ENCODE measurements at regions of chr11 and their contacts with region 1.

Region 1: DNA sequence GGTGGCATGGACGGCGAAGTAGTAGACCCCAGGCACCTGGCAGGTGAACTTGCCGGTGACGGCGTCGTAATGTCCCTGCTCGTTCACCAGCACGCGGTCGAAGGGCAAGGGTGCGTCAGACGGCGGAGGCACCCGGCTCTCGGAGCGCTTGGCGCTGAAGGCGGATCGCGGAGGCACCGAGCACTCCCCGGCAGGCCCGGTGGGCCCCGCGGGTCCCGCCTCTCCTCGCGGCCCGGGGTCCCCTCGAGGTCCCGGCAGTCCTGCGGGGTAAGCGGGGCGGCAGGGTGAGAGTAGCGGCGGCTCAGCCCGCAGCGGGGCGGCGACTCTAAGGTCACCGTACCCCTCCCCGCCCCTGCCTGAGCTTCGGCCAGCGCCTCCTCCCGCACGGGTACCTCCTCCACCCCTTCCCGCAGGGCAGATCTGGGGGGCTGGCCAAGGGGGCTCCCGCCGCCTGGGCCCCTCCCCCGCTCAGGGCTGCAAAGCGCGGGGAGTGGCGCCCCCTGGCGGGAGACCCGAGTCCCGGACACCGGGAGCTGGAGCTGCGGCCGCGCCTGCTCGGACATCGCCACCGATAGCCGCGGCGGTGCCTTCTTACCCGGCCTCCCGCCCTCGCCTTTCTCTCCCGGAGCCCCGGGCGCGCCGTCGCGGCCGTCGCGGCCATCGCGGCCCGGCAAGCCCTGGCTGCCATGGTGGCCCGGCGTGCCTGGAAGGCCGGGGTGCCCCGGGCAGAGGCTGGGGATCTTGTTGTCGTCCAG is 917 bp downstream of the C1QTNF5 start:
- DNase-seq: peak; percentile 71
- H3K4me3 ChIP-seq: peak overlapping the region; percentile 41 to 90 (median 65)
- H3K27ac ChIP-seq: peak overlapping the region; percentile 67
- H3K4me1 ChIP-seq: peaks cover 39% of the 10 kb centered on the region
- H3K27me3 ChIP-seq: no peaks in the 10 kb centered on the region
- CTCF ChIP-seq: peak; percentile 90 to 94
- POLR2A ChIP-seq: no peak

Region 2: DNA sequence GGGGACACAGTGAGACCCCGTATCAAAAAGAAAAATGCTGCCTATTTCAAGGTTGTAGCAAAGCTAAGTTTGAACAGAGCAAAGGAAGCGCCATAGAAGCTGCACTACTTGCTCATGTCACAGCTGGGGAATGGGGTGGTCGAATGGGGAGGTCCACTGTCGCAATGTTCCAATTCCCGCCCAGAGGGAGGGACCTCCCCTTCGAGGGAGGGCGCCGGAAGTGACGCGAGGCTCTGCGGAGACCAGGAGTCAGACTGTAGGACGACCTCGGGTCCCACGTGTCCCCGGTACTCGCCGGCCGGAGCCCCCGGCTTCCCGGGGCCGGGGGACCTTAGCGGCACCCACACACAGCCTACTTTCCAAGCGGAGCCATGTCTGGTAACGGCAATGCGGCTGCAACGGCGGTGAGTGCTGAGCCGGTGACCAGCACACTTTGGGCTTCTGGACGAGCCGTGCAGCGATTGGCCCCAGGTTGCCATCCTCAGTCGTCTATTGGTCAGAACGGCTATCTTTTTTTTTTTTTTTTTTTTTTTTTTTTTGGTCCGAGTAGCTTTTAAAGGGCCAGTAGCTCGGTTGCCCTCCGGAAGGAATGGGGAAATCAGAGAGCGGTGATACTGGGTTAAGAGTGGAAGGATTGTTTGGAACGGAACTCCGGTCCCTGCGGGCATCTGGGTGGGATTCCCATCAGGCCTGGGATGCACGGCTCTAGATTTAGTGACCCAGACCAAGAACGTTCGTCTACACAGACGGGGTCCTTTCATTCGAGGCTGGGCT is 254.9 kb before region 1 on chr11 and contains the start of gene HMBS:
- CTCF ChIA-PET with region 1: no interaction called
- POLR2A ChIA-PET with region 1: no interaction called
- dilution Hi-C with region 1: no loop called
- intact Hi-C with region 1: no loop called
- DNase-seq: peak; percentile 95
- H3K4me3 ChIP-seq: peak within 1 kb of the TSS; percentile 10 to 77 (median 70)
- H3K27ac ChIP-seq: peak within 1 kb of the TSS; percentile 49
- H3K4me1 ChIP-seq: peaks cover 12% of the 10 kb centered on the region
- H3K27me3 ChIP-seq: no peaks in the 10 kb centered on the region
- CTCF ChIP-seq: no peak
- POLR2A ChIP-seq: peak; percentile 97
- total RNA-seq, gene HMBS: 13.5 and 16.1 TPM in 2 replicates

Region 3: GRCh38 chr11:119315131-119316015 is 24.4 kb before region 1 on chr11:
- CTCF ChIA-PET with region 1: interaction called, 301 read pairs
- POLR2A ChIA-PET with region 1: interaction called, 18 read pairs
- dilution Hi-C with region 1: no loop called
- intact Hi-C with region 1: no loop called
- DNase-seq: peak; percentile 49
- H3K4me3 ChIP-seq: peak overlapping the region; percentile 87 to 93 (median 89)
- H3K27ac ChIP-seq: peak overlapping the region; percentile 80
- H3K4me1 ChIP-seq: peaks cover 44% of the 10 kb centered on the region
- H3K27me3 ChIP-seq: no peaks in the 10 kb centered on the region
- CTCF ChIP-seq: peak; percentile 16 to 46
- POLR2A ChIP-seq: no peak

Region 4: DNA sequence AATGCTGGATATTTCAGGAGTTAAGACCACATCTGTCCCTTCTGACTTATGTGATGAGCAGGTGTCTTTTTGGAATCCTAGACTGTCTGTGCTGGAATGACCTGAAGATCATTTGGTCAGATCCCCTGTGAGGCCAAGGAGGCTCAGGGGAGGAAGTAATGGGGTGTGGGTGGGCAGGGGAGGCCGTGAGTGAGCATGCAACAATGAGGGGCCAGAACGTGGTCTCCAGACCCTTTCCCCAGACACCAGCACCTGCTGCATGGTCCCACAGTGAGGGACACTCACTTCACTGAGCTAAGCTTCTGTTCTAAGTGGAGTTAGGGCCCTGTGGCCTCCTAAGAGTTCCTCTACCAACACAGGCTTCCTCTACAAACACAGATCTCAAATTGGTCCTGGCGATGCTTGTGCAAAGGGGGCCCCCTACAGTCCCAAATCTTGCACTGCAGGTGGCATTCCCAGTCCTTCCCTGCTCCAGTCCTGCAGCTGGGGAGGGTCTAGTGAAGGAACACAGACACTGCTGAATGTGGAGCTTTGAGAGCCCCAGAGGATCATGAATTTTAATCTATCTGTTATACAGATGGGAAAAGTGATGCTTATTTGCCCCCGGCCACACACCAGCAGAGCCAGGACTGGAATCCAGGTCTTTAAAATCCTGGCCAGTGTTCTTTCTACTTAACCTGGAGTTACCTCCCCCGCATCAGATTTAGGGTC is 34.3 kb after region 1 on chr11:
- CTCF ChIA-PET with region 1: interaction called, 134 read pairs
- POLR2A ChIA-PET with region 1: interaction called, 12 read pairs
- dilution Hi-C with region 1: no loop called
- intact Hi-C with region 1: loop called (anchors 1 kb)
- DNase-seq: peak; percentile 79
- H3K4me3 ChIP-seq: no peak overlapping the region
- H3K27ac ChIP-seq: no peak overlapping the region
- H3K4me1 ChIP-seq: no peaks in the 10 kb centered on the region
- H3K27me3 ChIP-seq: no peaks in the 10 kb centered on the region
- CTCF ChIP-seq: peak; percentile 90 to 92
- POLR2A ChIP-seq: no peak

Region 5: DNA sequence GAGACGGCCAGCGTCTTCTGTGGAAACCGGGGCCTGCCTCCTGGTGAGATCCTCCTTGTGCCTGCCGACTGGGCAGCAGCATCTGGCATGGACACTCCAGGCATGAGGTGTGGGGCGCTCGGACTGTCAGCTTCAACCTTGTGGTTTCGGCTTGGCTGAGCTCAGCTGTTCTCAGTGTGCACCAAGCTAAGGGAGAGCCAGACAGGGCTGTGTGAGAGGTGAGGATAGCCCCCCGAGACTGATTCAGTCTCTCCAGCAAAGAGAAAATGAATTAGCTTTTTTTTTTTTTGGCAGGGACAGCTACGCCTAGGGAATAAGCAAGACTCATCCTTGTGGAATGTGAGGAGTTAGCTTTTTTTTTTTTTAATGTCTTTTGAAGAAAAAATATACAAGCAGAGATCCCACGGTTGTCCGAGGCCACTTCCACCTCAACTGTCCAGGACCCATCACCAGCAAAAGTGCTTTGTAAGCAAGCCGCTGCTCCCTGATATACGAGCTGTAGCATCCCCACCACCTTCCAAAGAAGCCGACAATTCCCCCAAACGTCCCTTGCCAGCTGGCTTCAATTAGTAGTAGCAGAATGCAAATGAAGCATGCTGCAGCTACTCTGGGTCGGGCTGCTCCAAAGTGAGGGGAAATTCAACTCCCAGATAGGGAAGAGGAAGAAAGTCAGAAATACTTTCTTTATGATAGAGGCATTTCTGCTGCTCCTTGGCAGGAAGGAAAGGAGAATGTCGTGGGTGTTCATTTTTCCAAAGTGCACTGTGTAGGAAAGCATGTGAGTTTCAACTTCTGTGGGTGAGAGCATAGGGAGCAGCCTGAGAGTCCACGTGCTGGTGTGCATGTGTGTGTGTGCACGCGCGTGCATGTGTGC is 93.0 kb after region 1 on chr11:
- CTCF ChIA-PET with region 1: no interaction called
- POLR2A ChIA-PET with region 1: no interaction called
- dilution Hi-C with region 1: no loop called
- intact Hi-C with region 1: no loop called
- DNase-seq: no peak
- H3K4me3 ChIP-seq: no peak overlapping the region
- H3K27ac ChIP-seq: no peak overlapping the region
- H3K4me1 ChIP-seq: no peaks in the 10 kb centered on the region
- H3K27me3 ChIP-seq: peaks cover 4 to 7% of the 10 kb centered on the region in 2 experiments
- CTCF ChIP-seq: no peak
- POLR2A ChIP-seq: no peak

Region 6: GRCh38 chr11:119474682-119475596 is 135.2 kb after region 1 on chr11:
- CTCF ChIA-PET with region 1: interaction called, 12 read pairs
- POLR2A ChIA-PET with region 1: no interaction called
- dilution Hi-C with region 1: no loop called
- intact Hi-C with region 1: loop called (anchors 1 kb)
- DNase-seq: peak; percentile 47
- H3K4me3 ChIP-seq: no peak overlapping the region
- H3K27ac ChIP-seq: no peak overlapping the region
- H3K4me1 ChIP-seq: no peaks in the 10 kb centered on the region
- H3K27me3 ChIP-seq: peaks cover 0 to 2% of the 10 kb centered on the region in 2 experiments
- CTCF ChIP-seq: peak; percentile 79 to 83
- POLR2A ChIP-seq: no peak

Measured in endothelial cell of umbilical vein (primary cell).